ENCODE measurements at regions of chr16 and their contacts with region 1.

Region 1: GRCh38 chr16:88737298-88738150 is 31.2 kb downstream of the CTU2 start:
- DNase-seq: peak; percentile 81
- ATAC-seq: peak; percentile 86
- H3K4me3 Mint-ChIP-seq: no peak overlapping the region
- H3K27ac Mint-ChIP-seq: no peak overlapping the region
- H3K4me1 Mint-ChIP-seq: no peaks in the 10 kb centered on the region
- H3K27me3 Mint-ChIP-seq: no peaks in the 10 kb centered on the region
- CTCF ChIP-seq: peak; percentile 99

Region 2: GRCh38 chr16:88527186-88527936 is 210.2 kb before region 1 on chr16:
- CTCF ChIA-PET with region 1: no interaction called
- POLR2A ChIA-PET with region 1: no interaction called
- DNase-seq: peak; percentile 86
- ATAC-seq: peak; percentile 79
- H3K4me3 Mint-ChIP-seq: no peak overlapping the region
- H3K27ac Mint-ChIP-seq: no peak overlapping the region
- H3K4me1 Mint-ChIP-seq: peaks cover 6% of the 10 kb centered on the region; the same call in 1 of the 2 replicates
- H3K27me3 Mint-ChIP-seq: no peaks in the 10 kb centered on the region
- CTCF ChIP-seq: peak; percentile 68

Region 3: DNA sequence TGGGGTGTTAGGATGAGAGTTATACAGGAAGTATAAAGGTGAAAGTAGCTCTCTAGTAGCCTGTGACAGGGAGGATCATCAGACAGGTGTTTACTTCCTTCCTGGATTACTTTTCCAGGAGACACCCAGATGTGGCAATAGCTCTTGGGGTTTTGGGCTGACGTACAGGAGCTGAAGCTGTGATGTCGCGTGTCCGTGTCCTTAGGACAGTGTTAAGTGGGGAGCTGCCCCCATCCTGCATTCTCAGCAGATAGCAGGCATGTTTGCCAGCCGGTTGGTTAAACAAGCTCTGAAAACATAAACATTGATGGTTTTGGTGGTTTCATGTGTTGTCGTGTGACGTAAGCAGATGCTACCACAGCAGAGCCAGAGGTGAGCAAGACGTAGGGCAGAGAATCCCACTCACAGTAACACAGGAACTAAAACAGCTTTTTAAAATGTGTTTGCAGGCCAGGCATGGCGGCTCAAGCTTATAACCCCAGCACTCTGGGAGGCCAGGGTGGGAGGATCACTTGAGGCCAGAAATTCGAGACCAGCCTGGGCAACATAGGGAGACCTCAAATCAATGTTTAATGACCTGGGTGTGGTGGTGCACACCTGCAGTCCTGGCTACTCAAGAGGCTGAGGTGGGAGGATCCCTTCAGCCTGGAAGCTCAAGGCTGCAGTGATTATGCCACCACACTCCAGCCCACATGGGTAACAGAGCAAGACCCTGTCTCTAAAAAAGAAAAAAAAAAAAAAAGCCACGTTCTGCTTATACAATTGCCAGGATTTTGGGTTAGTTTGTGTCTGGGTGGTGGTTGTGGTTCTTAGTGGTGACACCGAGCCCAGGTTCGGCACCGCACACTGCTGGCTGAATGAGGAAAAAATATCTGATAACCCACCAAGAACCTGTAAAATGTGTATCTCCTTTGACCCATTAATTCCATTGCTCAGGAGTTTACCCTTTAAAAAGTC is 117.4 kb before region 1 on chr16:
- CTCF ChIA-PET with region 1: interaction called, 10 read pairs
- POLR2A ChIA-PET with region 1: no interaction called
- DNase-seq: no peak
- ATAC-seq: no peak
- H3K4me3 Mint-ChIP-seq: no peak overlapping the region
- H3K27ac Mint-ChIP-seq: 0 out of 2 replicates have a peak overlapping the region, but pooled peaks have one; percentile 19
- H3K4me1 Mint-ChIP-seq: peaks cover 4% of the 10 kb centered on the region
- H3K27me3 Mint-ChIP-seq: no peaks in the 10 kb centered on the region
- CTCF ChIP-seq: no peak

Region 4: DNA sequence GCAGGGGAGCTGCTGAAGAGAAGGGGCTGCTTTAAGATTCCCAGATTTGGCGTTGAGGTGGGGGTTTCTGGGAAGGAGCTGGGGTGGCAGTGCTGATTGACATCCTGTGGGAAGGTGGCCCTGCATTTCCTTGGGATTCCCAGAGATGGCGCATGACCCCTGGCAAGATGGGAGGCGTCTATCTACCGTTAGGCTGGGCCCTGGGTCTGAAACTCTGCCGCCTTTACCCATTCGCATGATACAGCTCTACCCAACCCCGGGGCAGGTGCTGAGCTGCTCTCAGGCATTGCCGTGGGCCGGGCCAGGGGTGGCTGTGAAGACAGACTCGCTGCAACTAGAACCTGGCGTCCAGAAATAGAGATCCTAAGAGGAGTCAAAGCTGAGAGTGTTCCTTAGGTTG is 64.7 kb before region 1 on chr16:
- CTCF ChIA-PET with region 1: interaction called, 44 read pairs
- POLR2A ChIA-PET with region 1: no interaction called
- DNase-seq: peak; percentile 80
- ATAC-seq: peak; percentile 98
- H3K4me3 Mint-ChIP-seq: no peak overlapping the region
- H3K27ac Mint-ChIP-seq: peak overlapping the region; percentile 49; the same call in 1 of the 2 replicates
- H3K4me1 Mint-ChIP-seq: no peaks in the 10 kb centered on the region; the same call in 1 of the 2 replicates
- H3K27me3 Mint-ChIP-seq: no peaks in the 10 kb centered on the region
- CTCF ChIP-seq: no peak

Region 5: GRCh38 chr16:88706288-88706964 is 31.1 kb before region 1 on chr16 and contains the starts of genes CTU2 and RNF166:
- CTCF ChIA-PET with region 1: interaction called, 46 read pairs
- POLR2A ChIA-PET with region 1: no interaction called
- DNase-seq: peak; percentile 90
- ATAC-seq: peak; percentile 84
- H3K4me3 Mint-ChIP-seq: peak within 1 kb of the TSS; percentile 85
- H3K27ac Mint-ChIP-seq: peak within 1 kb of the TSS; percentile 42
- H3K4me1 Mint-ChIP-seq: peaks cover 19% of the 10 kb centered on the region
- H3K27me3 Mint-ChIP-seq: no peaks in the 10 kb centered on the region
- CTCF ChIP-seq: no peak
- total RNA-seq, gene CTU2: 42.1 to 52.4 TPM (median 43.7 TPM) in 3 replicates
- total RNA-seq, gene RNF166: 38.5 to 46.2 TPM (median 40.5 TPM) in 3 replicates

Region 6: GRCh38 chr16:88763502-88764053 is 26.1 kb after region 1 on chr16:
- CTCF ChIA-PET with region 1: interaction called, 185 read pairs
- POLR2A ChIA-PET with region 1: no interaction called
- DNase-seq: peak; percentile 91
- ATAC-seq: peak; percentile 79
- H3K4me3 Mint-ChIP-seq: peak overlapping the region; percentile 26; the same call in 1 of the 2 replicates
- H3K27ac Mint-ChIP-seq: peak overlapping the region; percentile 99
- H3K4me1 Mint-ChIP-seq: peaks cover 33% of the 10 kb centered on the region
- H3K27me3 Mint-ChIP-seq: no peaks in the 10 kb centered on the region
- CTCF ChIP-seq: no peak

Region 7: GRCh38 chr16:88803264-88803987 is 65.9 kb after region 1 on chr16 and contains the start of gene CDT1:
- CTCF ChIA-PET with region 1: interaction called, 34 read pairs
- POLR2A ChIA-PET with region 1: no interaction called
- DNase-seq: peak; percentile 77
- ATAC-seq: peak; percentile 8
- H3K4me3 Mint-ChIP-seq: peak within 1 kb of the TSS; percentile 77
- H3K27ac Mint-ChIP-seq: no peak within 1 kb of the TSS; the same call in 1 of the 2 replicates
- H3K4me1 Mint-ChIP-seq: no peaks in the 10 kb centered on the region
- H3K27me3 Mint-ChIP-seq: no peaks in the 10 kb centered on the region
- CTCF ChIP-seq: no peak
- total RNA-seq, gene CDT1: 142 to 154 TPM (median 149 TPM) in 3 replicates

Region 8: GRCh38 chr16:88905563-88905962 is 168.0 kb after region 1 on chr16:
- CTCF ChIA-PET with region 1: interaction called, 20 read pairs
- POLR2A ChIA-PET with region 1: no interaction called
- DNase-seq: peak; percentile 73
- ATAC-seq: peak; percentile 63
- H3K4me3 Mint-ChIP-seq: no peak overlapping the region
- H3K27ac Mint-ChIP-seq: no peak overlapping the region
- H3K4me1 Mint-ChIP-seq: peaks cover 2% of the 10 kb centered on the region; the same call in 1 of the 2 replicates
- H3K27me3 Mint-ChIP-seq: no peaks in the 10 kb centered on the region
- CTCF ChIP-seq: no peak